Esophagus squamous epithelium (tissue), 5 donors: ENCODE measurements at regions of chr6 and their contacts with region 1.

Region 1: GRCh38 chr6:150813319-150813992 is 52.0 kb upstream of the MTHFD1L start:
- DNase-seq: no peak
- H3K4me3 ChIP-seq: no peak overlapping the region
- H3K27ac ChIP-seq: peak overlapping the region; percentile 61 to 90 (median 74)
- H3K4me1 ChIP-seq: peaks cover 0 to 37% (median 13%) of the 10 kb centered on the region in 3 donors
- H3K27me3 ChIP-seq: no peaks in the 10 kb centered on the region
- CTCF ChIP-seq: no peak
- POLR2A ChIP-seq: no peak

Region 2: DNA sequence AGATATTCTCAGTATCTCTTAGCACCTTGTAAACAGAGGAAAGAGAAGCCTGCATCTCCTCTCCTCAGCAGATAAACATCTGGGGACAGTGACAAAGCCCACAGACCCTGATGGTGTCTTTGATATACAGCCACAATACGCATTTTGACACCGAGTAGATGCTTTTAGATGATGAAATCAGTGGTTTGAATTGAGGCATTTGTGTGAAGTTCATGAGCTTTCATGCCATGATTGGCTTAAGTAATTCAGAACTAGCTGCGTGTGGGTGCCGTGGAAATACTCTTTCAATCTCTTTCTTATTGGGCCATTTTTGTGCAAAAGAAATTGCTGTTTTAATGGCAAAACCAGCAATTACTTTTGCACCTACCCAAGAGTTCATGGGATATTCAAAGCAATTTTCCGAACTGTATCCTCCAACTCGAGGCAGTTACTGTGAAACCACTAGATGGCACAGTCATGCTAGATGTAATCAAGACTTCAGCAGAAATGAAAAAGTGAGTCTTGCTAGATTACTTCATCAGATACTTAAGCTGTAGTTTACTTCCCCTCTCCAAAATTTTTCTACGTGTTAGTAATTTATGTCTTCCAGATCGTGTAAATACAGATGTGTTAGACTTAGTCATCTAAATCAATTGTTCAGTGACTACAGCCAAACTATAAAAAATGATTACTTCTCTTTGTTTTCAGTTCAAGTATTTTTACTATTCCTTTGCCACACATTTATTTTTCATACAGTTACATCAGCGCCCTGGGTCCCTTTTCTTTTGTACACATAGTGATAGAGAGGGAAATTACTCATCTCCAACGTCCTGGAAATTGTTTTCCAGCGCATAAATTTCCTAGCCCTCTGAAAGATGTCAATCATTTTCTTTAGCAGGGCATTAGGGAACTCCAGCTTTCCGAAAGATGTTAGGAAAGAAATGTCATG is 395.3 kb before region 1 on chr6:
- intact Hi-C with region 1: loop called (anchors 5 kb)
- DNase-seq: no peak
- H3K4me3 ChIP-seq: peak overlapping the region; percentile 22 to 64 (median 40)
- H3K27ac ChIP-seq: peak overlapping the region; percentile 49 to 80 (median 74)
- H3K4me1 ChIP-seq: peaks cover 3 to 23% (median 4%) of the 10 kb centered on the region in 3 donors
- H3K27me3 ChIP-seq: peaks cover 0 to 5% (median 0%) of the 10 kb centered on the region in 4 donors
- CTCF ChIP-seq: peak; percentile 64 to 85 (median 78)
- POLR2A ChIP-seq: no peak

Region 3: GRCh38 chr6:150685860-150686259 is 127.6 kb before region 1 on chr6:
- intact Hi-C with region 1: loop called (anchors 10 kb)
- DNase-seq: no peak
- H3K4me3 ChIP-seq: no peak overlapping the region
- H3K27ac ChIP-seq: peak overlapping the region in 2 of 4 donors; percentile 71 to 85
- H3K4me1 ChIP-seq: peaks cover 12 to 62% (median 29%) of the 10 kb centered on the region in 3 donors
- H3K27me3 ChIP-seq: no peaks in the 10 kb centered on the region
- CTCF ChIP-seq: peak; percentile 26 to 80 (median 54)
- POLR2A ChIP-seq: no peak

Region 4: GRCh38 chr6:151060096-151060765 is 246.8 kb after region 1 on chr6:
- intact Hi-C with region 1: no loop called
- DNase-seq: no peak
- H3K4me3 ChIP-seq: no peak overlapping the region
- H3K27ac ChIP-seq: peak overlapping the region in 2 of 4 donors; percentile 32 to 47
- H3K4me1 ChIP-seq: peaks cover 0 to 28% (median 5%) of the 10 kb centered on the region in 3 donors
- H3K27me3 ChIP-seq: no peaks in the 10 kb centered on the region
- CTCF ChIP-seq: no peak
- POLR2A ChIP-seq: no peak